MCF 10A (cell line): ENCODE measurements at regions of chr20 and their contacts with region 1.

Region 1: GRCh38 chr20:45971675-45972499 is at the start of gene ZNF335:
- DNase-seq: peak; percentile 92
- H3K4me3 Mint-ChIP-seq: peak within 1 kb of the TSS; percentile 71
- H3K27ac Mint-ChIP-seq: peak within 1 kb of the TSS; percentile 100
- H3K4me1 Mint-ChIP-seq: peaks cover 25% of the 10 kb centered on the region
- H3K27me3 Mint-ChIP-seq: no peaks in the 10 kb centered on the region
- CTCF ChIP-seq: no peak
- total RNA-seq, gene ZNF335: 24.2 and 26.9 TPM in 2 replicates

Region 2: GRCh38 chr20:45798935-45799642 is 172.8 kb before region 1 on chr20:
- CTCF ChIA-PET with region 1: interaction called, 46 read pairs
- POLR2A ChIA-PET with region 1: no interaction called
- intact Hi-C with region 1: no loop called
- DNase-seq: peak; percentile 71
- H3K4me3 Mint-ChIP-seq: no peak overlapping the region
- H3K27ac Mint-ChIP-seq: peak overlapping the region; percentile 40
- H3K4me1 Mint-ChIP-seq: peaks cover 6% of the 10 kb centered on the region
- H3K27me3 Mint-ChIP-seq: no peaks in the 10 kb centered on the region
- CTCF ChIP-seq: peak; percentile 74

Region 3: GRCh38 chr20:45890985-45891983 is 80.6 kb before region 1 on chr20 and contains the starts of genes CTSA and NEURL2:
- CTCF ChIA-PET with region 1: interaction called, 8 read pairs
- POLR2A ChIA-PET with region 1: interaction called, 19 read pairs
- intact Hi-C with region 1: no loop called
- DNase-seq: peak; percentile 89
- H3K4me3 Mint-ChIP-seq: peak within 1 kb of the TSS; percentile 95
- H3K27ac Mint-ChIP-seq: peak within 1 kb of the TSS; percentile 86
- H3K4me1 Mint-ChIP-seq: peaks cover 6% of the 10 kb centered on the region
- H3K27me3 Mint-ChIP-seq: no peaks in the 10 kb centered on the region
- CTCF ChIP-seq: no peak
- total RNA-seq, gene CTSA: 25.3 and 39.1 TPM in 2 replicates
- total RNA-seq, gene NEURL2: 2.0 and 2.5 TPM in 2 replicates

Region 4: GRCh38 chr20:45946149-45946970 is 25.5 kb before region 1 on chr20:
- CTCF ChIA-PET with region 1: interaction called, 64 read pairs
- POLR2A ChIA-PET with region 1: interaction called, 46 read pairs
- intact Hi-C with region 1: no loop called
- DNase-seq: peak; percentile 74
- H3K4me3 Mint-ChIP-seq: peak overlapping the region; percentile 21
- H3K27ac Mint-ChIP-seq: peak overlapping the region; percentile 85
- H3K4me1 Mint-ChIP-seq: peaks cover 24% of the 10 kb centered on the region
- H3K27me3 Mint-ChIP-seq: no peaks in the 10 kb centered on the region
- CTCF ChIP-seq: no peak

Region 5: DNA sequence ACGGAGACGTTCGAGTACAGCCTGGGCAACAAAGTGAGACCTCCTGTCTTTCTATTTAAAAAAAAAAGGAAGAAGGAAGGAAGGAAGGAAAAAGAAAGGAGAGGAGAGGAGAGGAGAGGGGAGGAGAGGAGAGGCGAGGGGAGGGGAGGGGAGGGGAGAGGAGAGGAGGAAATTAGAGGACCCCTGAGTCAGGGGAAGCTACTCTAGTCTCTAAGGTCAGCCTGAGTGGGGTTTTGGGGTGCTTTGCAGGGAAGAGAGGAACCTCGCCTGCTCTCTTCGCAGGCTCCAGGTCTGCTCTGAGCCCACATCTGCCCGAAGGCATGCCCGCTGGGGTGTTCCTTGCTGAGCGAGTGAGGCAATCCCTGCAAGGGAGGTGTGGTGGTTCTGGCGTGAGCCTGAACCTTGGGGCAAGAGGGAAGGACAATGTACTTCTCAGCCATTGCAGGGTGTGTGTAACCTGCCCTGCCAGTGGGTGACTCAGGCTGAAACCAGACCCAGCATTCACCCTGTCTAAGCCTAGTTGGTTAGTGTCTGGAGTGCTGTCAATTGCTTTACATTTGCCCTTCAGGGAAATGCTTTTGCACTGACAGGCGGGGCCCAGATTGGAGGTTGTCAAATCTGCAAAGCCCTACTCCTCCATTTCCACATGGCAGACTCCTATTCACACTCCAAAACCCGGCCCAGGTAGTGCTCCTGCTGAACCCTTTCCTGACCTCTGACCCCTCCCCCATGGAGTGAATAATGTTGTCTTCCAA is 21.5 kb after region 1 on chr20:
- CTCF ChIA-PET with region 1: interaction called, 200 read pairs
- POLR2A ChIA-PET with region 1: interaction called, 81 read pairs
- intact Hi-C with region 1: loop called (anchors 1 kb)
- DNase-seq: peak; percentile 97
- H3K4me3 Mint-ChIP-seq: peak overlapping the region; percentile 33
- H3K27ac Mint-ChIP-seq: peak overlapping the region; percentile 57
- H3K4me1 Mint-ChIP-seq: peaks cover 25% of the 10 kb centered on the region
- H3K27me3 Mint-ChIP-seq: no peaks in the 10 kb centered on the region
- CTCF ChIP-seq: no peak

Region 6: GRCh38 chr20:46089417-46090388 is 117.8 kb after region 1 on chr20 and contains the start of gene NCOA5:
- CTCF ChIA-PET with region 1: interaction called, 42 read pairs
- POLR2A ChIA-PET with region 1: interaction called, 83 read pairs
- intact Hi-C with region 1: loop called (anchors 1 kb)
- DNase-seq: peak; percentile 93
- H3K4me3 Mint-ChIP-seq: peak within 1 kb of the TSS; percentile 84
- H3K27ac Mint-ChIP-seq: peak within 1 kb of the TSS; percentile 85
- H3K4me1 Mint-ChIP-seq: peaks cover 28% of the 10 kb centered on the region
- H3K27me3 Mint-ChIP-seq: no peaks in the 10 kb centered on the region
- CTCF ChIP-seq: no peak
- total RNA-seq, gene NCOA5: 26.0 and 31.2 TPM in 2 replicates